Gastrocnemius medialis (tissue), 4 donors: ENCODE measurements at regions of chr9 and their contacts with region 1.

Region 1: DNA sequence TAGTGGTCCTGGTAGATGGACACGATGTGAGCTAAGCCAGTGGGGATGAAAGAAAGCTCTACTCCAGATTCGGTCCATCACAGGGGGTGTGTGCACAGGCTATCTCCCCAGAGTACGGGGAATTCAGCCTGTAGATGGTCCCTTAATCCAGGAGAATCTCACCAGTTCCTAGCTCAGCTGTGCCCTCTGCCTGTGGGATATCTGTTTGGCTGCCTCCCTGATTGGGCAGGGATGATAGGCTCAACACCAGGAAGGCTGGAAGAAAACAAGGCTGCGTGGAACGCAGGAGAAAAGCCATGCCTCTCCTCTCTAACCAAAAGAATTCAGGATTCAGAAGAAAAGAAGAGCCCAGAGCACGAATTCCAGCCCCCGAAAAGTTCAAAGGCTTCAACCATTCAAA is 40.9 kb downstream of the VLDLR start:
- DNase-seq: peak in 1 of 2 donors; percentile 40
- ATAC-seq: peak in 1 of 2 donors; percentile 45
- H3K4me3 ChIP-seq: no peak overlapping the region
- H3K27ac ChIP-seq: peak overlapping the region; percentile 76 to 92 (median 86)
- H3K4me1 ChIP-seq: peaks cover 29 to 43% of the 10 kb centered on the region in 2 donors
- H3K27me3 ChIP-seq: no peaks in the 10 kb centered on the region
- CTCF ChIP-seq: peak in 3 of 5 experiments; percentile 24 to 33 (median 26)
- POLR2A ChIP-seq: no peak

Region 2: GRCh38 chr9:2620919-2621679 is 41.4 kb before region 1 on chr9:
- in situ Hi-C with region 1: no loop called
- intact Hi-C with region 1: loop called (anchors 2 kb)
- DNase-seq: peak; percentile 71 to 85
- ATAC-seq: peak; percentile 56 to 59
- H3K4me3 ChIP-seq: peak overlapping the region; percentile 72 to 94 (median 90)
- H3K27ac ChIP-seq: peak overlapping the region; percentile 95 to 98 (median 97)
- H3K4me1 ChIP-seq: peaks cover 16 to 29% of the 10 kb centered on the region in 2 donors
- H3K27me3 ChIP-seq: no peaks in the 10 kb centered on the region
- CTCF ChIP-seq: peak in 4 of 5 experiments; percentile 21 to 40 (median 32)
- POLR2A ChIP-seq: peak; percentile 69 to 70